ENCODE measurements at regions of chr10 and their contacts with region 1.

Region 1: GRCh38 chr10:102503281-102504220 is at the start of gene SUFU:
- DNase-seq: peak; percentile 79
- H3K4me3 ChIP-seq: peak within 1 kb of the TSS; percentile 91
- H3K27me3 ChIP-seq: no peaks in the 10 kb centered on the region
- CTCF ChIP-seq: peak; percentile 94
- polyA plus RNA-seq, gene SUFU: 5.3 and 8.5 TPM in 2 replicates

Region 2: DNA sequence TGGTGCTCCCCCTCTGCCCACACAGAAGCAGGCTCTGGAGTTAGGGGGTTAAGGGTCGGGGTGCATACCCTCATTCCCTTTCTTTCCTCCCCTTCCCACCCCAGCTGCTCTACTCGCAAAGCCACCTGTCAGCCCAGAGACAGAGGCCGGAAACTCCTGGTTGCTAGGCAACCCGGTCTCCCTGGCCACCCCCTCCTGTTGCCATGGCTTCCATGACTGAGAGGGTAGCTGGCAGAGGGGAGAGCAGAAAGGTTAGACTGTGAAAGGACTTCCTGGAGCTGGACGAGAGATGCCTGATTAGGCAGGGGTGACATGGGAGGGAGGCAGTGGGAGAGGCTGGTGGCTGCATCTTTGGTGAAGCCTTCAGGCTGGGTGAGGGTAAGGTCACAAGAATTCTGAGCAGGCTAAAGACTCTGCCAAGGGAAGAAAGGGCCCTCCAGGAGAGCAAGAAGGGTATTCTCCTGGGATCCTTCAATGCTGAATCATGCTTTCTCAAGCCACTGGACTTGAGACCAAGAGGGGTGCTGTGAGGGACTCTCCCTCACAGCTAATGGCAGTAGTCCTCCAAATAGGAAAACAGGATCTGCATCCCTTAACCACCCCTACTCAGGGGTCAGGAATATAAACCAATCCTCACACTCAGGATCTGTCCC is 90.4 kb before region 1 on chr10:
- CTCF ChIA-PET with region 1: no interaction called
- POLR2A ChIA-PET with region 1: no interaction called
- DNase-seq: no peak
- H3K4me3 ChIP-seq: no peak overlapping the region
- H3K27me3 ChIP-seq: peaks cover 50% of the 10 kb centered on the region
- CTCF ChIP-seq: no peak

Region 3: DNA sequence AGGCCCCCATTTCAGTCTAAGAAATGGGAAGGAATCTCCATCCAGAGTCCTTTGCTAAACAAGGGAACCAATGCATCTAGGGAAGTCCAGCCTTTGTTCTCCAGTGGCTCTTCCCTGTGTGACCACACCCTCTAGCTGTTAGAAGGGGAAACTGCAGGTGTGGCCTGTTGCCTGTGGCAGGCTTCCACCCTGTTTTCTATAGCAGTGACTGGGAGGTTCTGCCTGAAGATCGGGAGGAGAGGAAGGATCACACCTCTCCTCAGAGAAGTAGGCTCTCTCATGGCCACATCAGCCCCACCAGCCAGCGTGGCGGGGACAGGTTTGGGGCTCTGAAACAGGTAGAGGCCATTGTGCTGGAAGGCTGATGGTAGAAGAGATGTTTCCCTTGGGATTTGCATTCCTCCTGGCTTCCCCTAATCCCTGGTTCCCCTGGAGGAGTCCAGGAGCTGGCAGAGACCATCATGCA is 93.0 kb after region 1 on chr10:
- CTCF ChIA-PET with region 1: interaction called, 11 read pairs
- POLR2A ChIA-PET with region 1: no interaction called
- DNase-seq: no peak
- H3K4me3 ChIP-seq: no peak overlapping the region
- H3K27me3 ChIP-seq: no peaks in the 10 kb centered on the region
- CTCF ChIP-seq: peak; percentile 91

Measured in BJ (cell line).